ENCODE measurements at regions of chr5 and their contacts with region 1.

Region 1: GRCh38 chr5:157603333-157604190 is 28.0 kb upstream of the ADAM19 start:
- DNase-seq: peak in 8 of 9 donors; percentile 16 to 65 (median 50)
- ATAC-seq: peak; percentile 90
- H3K4me3 ChIP-seq: peak overlapping the region; percentile 1
- H3K4me3 Mint-ChIP-seq: peak overlapping the region in 9 of 10 donors; percentile 0 to 74 (median 63)
- H3K27ac ChIP-seq: no peak overlapping the region
- H3K27ac Mint-ChIP-seq: peak overlapping the region in 7 of 9 donors; percentile 1 to 85 (median 49)
- H3K4me1 ChIP-seq: peaks cover 26 to 39% of the 10 kb centered on the region in 2 donors
- H3K4me1 Mint-ChIP-seq: peaks cover 30 to 81% (median 40%) of the 10 kb centered on the region in 7 donors
- H3K27me3 ChIP-seq: no peaks in the 10 kb centered on the region
- H3K27me3 Mint-ChIP-seq: no peaks in the 10 kb centered on the region

Region 2: GRCh38 chr5:157189223-157189622 is 414.3 kb before region 1 on chr5:
- CTCF ChIA-PET with region 1: no interaction called
- POLR2A ChIA-PET with region 1: no interaction called
- intact Hi-C with region 1: loop called in 1 of 2 experiments (anchors 10 kb)
- DNase-seq: no peak
- ATAC-seq: no peak
- H3K4me3 ChIP-seq: peak overlapping the region; percentile 68
- H3K4me3 Mint-ChIP-seq: peak overlapping the region; percentile 83 to 100 (median 96)
- H3K27ac ChIP-seq: peak overlapping the region; percentile 81
- H3K27ac Mint-ChIP-seq: peak overlapping the region; percentile 63 to 98 (median 91)
- H3K4me1 ChIP-seq: peaks cover 75 to 81% of the 10 kb centered on the region in 2 donors
- H3K4me1 Mint-ChIP-seq: peaks cover 56 to 94% (median 83%) of the 10 kb centered on the region in 7 donors
- H3K27me3 ChIP-seq: no peaks in the 10 kb centered on the region
- H3K27me3 Mint-ChIP-seq: no peaks in the 10 kb centered on the region

Region 3: DNA sequence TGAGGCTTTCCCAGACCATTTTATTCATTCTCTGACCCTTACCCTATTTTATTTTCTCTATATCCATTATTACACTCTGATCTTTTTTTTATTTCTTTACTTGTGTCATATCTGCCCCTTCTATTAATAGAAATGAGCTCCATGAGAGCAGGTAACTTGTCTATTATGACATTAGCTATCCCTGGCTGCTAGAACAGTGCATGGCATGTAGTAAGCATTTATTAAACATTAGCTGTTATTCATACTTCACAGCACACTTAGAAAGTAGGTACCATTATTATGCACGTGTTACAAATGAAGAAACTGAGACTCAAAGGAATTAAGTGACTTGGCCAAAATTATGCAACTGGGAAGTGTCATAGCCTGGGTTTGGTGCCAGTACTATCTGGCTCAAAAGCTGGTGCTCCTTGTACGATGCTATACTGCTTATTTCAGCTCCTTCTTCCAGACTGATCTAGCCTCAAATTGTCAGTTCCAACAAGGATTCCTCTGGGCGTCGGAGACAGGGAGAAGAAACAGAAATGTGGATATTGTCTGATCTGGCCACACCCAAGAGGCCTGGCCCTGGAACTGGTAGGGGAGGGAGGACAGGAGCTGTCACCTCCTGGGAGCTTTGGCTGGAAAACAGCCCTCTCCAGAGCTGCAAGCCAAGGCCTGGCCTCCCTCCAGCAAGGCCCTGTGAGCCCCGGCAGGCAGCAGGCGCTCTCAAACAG is 154.4 kb before region 1 on chr5:
- CTCF ChIA-PET with region 1: no interaction called
- POLR2A ChIA-PET with region 1: no interaction called
- intact Hi-C with region 1: no loop called
- DNase-seq: no peak
- ATAC-seq: no peak
- H3K4me3 ChIP-seq: no peak overlapping the region
- H3K4me3 Mint-ChIP-seq: no peak overlapping the region
- H3K27ac ChIP-seq: no peak overlapping the region
- H3K27ac Mint-ChIP-seq: no peak overlapping the region
- H3K4me1 ChIP-seq: no peaks in the 10 kb centered on the region
- H3K4me1 Mint-ChIP-seq: no peaks in the 10 kb centered on the region
- H3K27me3 ChIP-seq: no peaks in the 10 kb centered on the region
- H3K27me3 Mint-ChIP-seq: peaks cover 0 to 5% (median 0%) of the 10 kb centered on the region in 5 donors

Region 4: DNA sequence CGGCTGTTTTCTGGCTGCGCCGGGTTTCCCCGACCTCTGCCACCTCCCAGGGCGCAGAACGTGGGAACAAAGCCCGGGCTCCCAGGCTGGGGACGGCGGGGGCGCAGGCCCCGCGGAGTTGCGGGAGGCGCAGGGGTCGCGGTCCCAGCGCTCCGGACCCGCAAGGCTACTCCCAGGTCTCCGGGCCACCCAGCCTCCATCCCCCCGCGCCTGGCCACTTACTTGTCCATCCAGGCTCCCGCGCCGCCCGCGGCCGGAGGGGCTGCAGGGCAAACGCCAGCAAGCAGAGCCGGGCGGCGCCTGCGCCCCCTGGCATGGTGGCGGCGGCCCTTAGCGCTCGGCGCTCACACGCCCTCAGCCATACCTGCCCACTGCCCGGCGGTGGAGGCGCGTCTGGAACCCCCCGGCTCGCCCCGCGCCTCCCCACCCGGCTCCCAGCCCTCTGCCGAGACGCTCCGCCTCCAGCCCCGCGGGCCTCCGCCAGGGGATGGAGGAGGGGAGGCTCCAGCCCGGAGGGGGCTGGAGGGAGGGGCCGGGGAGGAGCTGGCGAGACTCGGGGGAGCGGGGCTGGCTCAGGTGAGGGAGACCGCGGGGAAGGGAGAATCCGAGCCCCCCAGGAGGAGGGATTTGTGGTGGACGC is 28.1 kb before region 1 on chr5 and contains the start of gene ADAM19:
- CTCF ChIA-PET with region 1: no interaction called
- POLR2A ChIA-PET with region 1: no interaction called
- intact Hi-C with region 1: loop called in 1 of 2 experiments (anchors 1 kb)
- DNase-seq: peak in 4 of 9 donors; percentile 15 to 72 (median 24)
- ATAC-seq: peak; percentile 68
- H3K4me3 ChIP-seq: peak within 1 kb of the TSS; percentile 45
- H3K4me3 Mint-ChIP-seq: peak within 1 kb of the TSS; percentile 85 to 99 (median 94)
- H3K27ac ChIP-seq: no peak within 1 kb of the TSS
- H3K27ac Mint-ChIP-seq: peak within 1 kb of the TSS in 5 of 9 donors; percentile 2 to 92 (median 65)
- H3K4me1 ChIP-seq: peaks cover 11% of the 10 kb centered on the region in 2 donors
- H3K4me1 Mint-ChIP-seq: peaks cover 16 to 73% (median 24%) of the 10 kb centered on the region in 7 donors
- H3K27me3 ChIP-seq: no peaks in the 10 kb centered on the region
- H3K27me3 Mint-ChIP-seq: peaks cover 0 to 14% (median 11%) of the 10 kb centered on the region in 5 donors
- total RNA-seq, gene ADAM19: 0.81 to 410 (median 7.3) TPM

Region 5: GRCh38 chr5:157651623-157652549 is 48.3 kb after region 1 on chr5 and contains the start of gene SOX30:
- CTCF ChIA-PET with region 1: no interaction called
- POLR2A ChIA-PET with region 1: no interaction called
- intact Hi-C with region 1: loop called (anchors 1 to 5 kb)
- DNase-seq: peak; percentile 68 to 87 (median 81)
- ATAC-seq: peak; percentile 98
- H3K4me3 ChIP-seq: peak within 1 kb of the TSS; percentile 54
- H3K4me3 Mint-ChIP-seq: peak within 1 kb of the TSS; percentile 65 to 88 (median 84)
- H3K27ac ChIP-seq: peak within 1 kb of the TSS; percentile 55
- H3K27ac Mint-ChIP-seq: peak within 1 kb of the TSS; percentile 59 to 91 (median 82)
- H3K4me1 ChIP-seq: peaks cover 0 to 4% of the 10 kb centered on the region in 2 donors
- H3K4me1 Mint-ChIP-seq: peaks cover 9 to 19% (median 16%) of the 10 kb centered on the region in 7 donors
- H3K27me3 ChIP-seq: no peaks in the 10 kb centered on the region
- H3K27me3 Mint-ChIP-seq: peaks cover 0 to 3% (median 0%) of the 10 kb centered on the region in 5 donors
- total RNA-seq, gene SOX30: 0.36 TPM in 1 of 5 experiments, not detected in the others

Region 6: GRCh38 chr5:157731272-157732129 is 127.9 kb after region 1 on chr5 and contains the start of gene THG1L:
- CTCF ChIA-PET with region 1: no interaction called
- POLR2A ChIA-PET with region 1: no interaction called
- intact Hi-C with region 1: loop called (anchors 1 to 2 kb)
- DNase-seq: peak; percentile 94 to 98 (median 96)
- ATAC-seq: peak; percentile 98
- H3K4me3 ChIP-seq: peak within 1 kb of the TSS; percentile 73
- H3K4me3 Mint-ChIP-seq: peak within 1 kb of the TSS; percentile 87 to 99 (median 97)
- H3K27ac ChIP-seq: peak within 1 kb of the TSS; percentile 73
- H3K27ac Mint-ChIP-seq: peak within 1 kb of the TSS; percentile 80 to 98 (median 93)
- H3K4me1 ChIP-seq: peaks cover 3 to 7% of the 10 kb centered on the region in 2 donors
- H3K4me1 Mint-ChIP-seq: peaks cover 9 to 26% (median 23%) of the 10 kb centered on the region in 7 donors
- H3K27me3 ChIP-seq: no peaks in the 10 kb centered on the region
- H3K27me3 Mint-ChIP-seq: no peaks in the 10 kb centered on the region
- total RNA-seq, gene THG1L: 6.2 to 17.4 (median 7.4) TPM

Region 7: GRCh38 chr5:157890836-157891597 is 287.5 kb after region 1 on chr5:
- CTCF ChIA-PET with region 1: no interaction called
- POLR2A ChIA-PET with region 1: no interaction called
- intact Hi-C with region 1: no loop called
- DNase-seq: peak in 5 of 9 donors; percentile 4 to 23 (median 19)
- ATAC-seq: peak; percentile 65
- H3K4me3 ChIP-seq: no peak overlapping the region
- H3K4me3 Mint-ChIP-seq: peak overlapping the region in 5 of 10 donors; percentile 12 to 40 (median 39)
- H3K27ac ChIP-seq: no peak overlapping the region
- H3K27ac Mint-ChIP-seq: peak overlapping the region in 8 of 9 donors; percentile 31 to 81 (median 76)
- H3K4me1 ChIP-seq: no peaks in the 10 kb centered on the region
- H3K4me1 Mint-ChIP-seq: peaks cover 0 to 23% (median 17%) of the 10 kb centered on the region in 7 donors
- H3K27me3 ChIP-seq: no peaks in the 10 kb centered on the region
- H3K27me3 Mint-ChIP-seq: no peaks in the 10 kb centered on the region

Measured in naive thymus-derived CD4-positive, alpha-beta T cell (primary cell).